Prostate gland (tissue), 2 donors: ENCODE measurements at regions of chr2 and their contacts with region 1.

Region 1: DNA sequence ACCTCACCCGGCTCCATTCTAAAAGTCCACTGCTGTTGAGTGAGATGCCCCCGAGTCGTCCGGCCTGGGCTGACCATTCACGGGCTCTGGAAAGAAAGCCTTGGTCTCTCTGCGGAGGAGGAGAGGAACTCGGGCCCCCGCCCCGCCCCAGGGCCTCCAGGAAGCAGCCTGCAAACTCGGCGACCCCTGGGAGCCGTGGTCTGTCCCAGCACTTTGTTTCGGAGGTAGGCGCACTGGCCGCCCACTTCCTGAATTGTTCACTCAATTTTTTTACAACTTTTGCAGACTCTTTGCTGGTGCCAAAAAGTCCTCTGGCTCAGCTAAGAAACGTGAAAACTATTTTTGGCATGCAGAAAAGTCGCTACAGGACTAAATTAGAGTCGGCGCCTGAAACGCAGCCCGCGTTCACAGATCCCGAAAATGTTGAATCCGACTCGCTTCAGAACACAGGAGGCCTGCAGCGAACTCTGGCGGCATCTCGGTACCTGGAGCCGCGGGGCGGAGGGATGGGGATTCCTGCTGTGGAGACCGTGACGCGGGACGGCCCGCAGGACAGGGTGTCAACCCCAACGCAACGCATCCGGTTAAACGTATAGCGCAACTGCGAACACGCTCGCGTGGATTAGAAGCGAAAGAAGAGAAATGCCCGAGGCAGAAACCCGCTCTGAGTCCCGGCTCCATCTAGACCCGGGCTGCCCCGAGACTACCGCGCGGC is 1.5 kb downstream of the PXDN start:
- DNase-seq: peak; percentile 85
- H3K4me3 ChIP-seq: peak overlapping the region; percentile 55 to 68
- H3K27ac ChIP-seq: peak overlapping the region; percentile 91 to 92
- H3K4me1 ChIP-seq: no peaks in the 10 kb centered on the region
- H3K27me3 ChIP-seq: no peaks in the 10 kb centered on the region
- CTCF ChIP-seq: peak; percentile 33 to 86 (median 68)
- POLR2A ChIP-seq: no peak

Region 2: DNA sequence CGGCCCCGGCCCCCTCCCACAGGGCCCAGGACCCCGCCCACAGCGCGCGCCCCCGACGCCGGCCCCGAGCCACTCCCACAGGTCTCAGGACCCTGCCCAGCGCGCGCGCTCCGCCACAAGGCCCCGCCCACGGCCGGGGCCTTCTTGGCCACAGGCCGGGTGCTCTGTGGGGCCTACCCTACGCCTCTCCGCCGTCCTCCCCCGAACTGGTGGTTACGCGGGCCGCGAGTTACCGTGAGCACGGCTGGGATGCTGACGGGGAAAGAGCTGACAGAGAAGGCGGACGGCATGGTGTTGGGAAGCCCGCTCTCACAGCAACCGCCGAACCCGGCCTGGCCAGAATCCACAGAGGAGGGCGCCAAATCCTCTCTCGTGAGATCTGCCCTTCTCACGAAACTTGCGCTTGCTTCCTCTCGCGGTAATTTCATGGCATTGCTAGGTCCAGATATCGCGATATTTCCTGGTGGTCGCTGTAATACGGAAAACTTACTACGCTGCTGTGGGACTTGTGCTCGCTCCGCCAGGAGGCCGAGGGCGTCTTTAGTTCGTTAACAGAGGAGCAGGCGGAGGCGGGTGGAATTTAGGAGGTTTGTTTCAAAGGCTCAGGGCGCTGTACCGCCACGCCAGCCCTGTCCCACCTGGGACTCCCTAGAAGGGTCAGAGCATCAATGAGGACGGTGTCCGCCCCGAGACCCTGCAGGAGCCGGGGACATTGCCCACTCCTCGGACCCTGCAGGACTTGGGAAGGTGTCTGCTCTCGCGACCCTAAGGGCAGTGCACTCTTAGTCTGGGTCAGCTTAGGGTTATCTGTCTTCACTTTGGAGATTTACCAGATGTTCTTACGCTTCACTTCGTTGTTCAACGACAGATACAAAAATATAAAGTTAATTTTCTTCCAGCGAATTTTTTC is 1065.5 kb before region 1 on chr2 and contains the start of gene TMEM18:
- intact Hi-C with region 1: loop called (anchors 10 kb)
- DNase-seq: peak; percentile 95
- H3K4me3 ChIP-seq: peak within 1 kb of the TSS; percentile 57 to 72
- H3K27ac ChIP-seq: peak within 1 kb of the TSS; percentile 95 to 98
- H3K4me1 ChIP-seq: no peaks in the 10 kb centered on the region
- H3K27me3 ChIP-seq: no peaks in the 10 kb centered on the region
- CTCF ChIP-seq: peak in 2 of 4 experiments; percentile 54 to 66
- POLR2A ChIP-seq: peak; percentile 72
- total RNA-seq, gene TMEM18: 17.7 to 19.3 TPM

Region 3: GRCh38 chr2:1550658-1551316 is 192.1 kb before region 1 on chr2:
- intact Hi-C with region 1: loop called (anchors 5 kb)
- DNase-seq: peak; percentile 33
- H3K4me3 ChIP-seq: no peak overlapping the region
- H3K27ac ChIP-seq: no peak overlapping the region
- H3K4me1 ChIP-seq: no peaks in the 10 kb centered on the region
- H3K27me3 ChIP-seq: no peaks in the 10 kb centered on the region
- CTCF ChIP-seq: peak; percentile 70 to 88 (median 85)
- POLR2A ChIP-seq: no peak

Region 4: GRCh38 chr2:1591978-1592907 is 150.6 kb before region 1 on chr2:
- intact Hi-C with region 1: loop called (anchors 1 kb)
- DNase-seq: peak; percentile 82
- H3K4me3 ChIP-seq: no peak overlapping the region
- H3K27ac ChIP-seq: no peak overlapping the region
- H3K4me1 ChIP-seq: peaks cover 2% of the 10 kb centered on the region
- H3K27me3 ChIP-seq: no peaks in the 10 kb centered on the region
- CTCF ChIP-seq: peak; percentile 54 to 91 (median 74)
- POLR2A ChIP-seq: no peak

Region 5: DNA sequence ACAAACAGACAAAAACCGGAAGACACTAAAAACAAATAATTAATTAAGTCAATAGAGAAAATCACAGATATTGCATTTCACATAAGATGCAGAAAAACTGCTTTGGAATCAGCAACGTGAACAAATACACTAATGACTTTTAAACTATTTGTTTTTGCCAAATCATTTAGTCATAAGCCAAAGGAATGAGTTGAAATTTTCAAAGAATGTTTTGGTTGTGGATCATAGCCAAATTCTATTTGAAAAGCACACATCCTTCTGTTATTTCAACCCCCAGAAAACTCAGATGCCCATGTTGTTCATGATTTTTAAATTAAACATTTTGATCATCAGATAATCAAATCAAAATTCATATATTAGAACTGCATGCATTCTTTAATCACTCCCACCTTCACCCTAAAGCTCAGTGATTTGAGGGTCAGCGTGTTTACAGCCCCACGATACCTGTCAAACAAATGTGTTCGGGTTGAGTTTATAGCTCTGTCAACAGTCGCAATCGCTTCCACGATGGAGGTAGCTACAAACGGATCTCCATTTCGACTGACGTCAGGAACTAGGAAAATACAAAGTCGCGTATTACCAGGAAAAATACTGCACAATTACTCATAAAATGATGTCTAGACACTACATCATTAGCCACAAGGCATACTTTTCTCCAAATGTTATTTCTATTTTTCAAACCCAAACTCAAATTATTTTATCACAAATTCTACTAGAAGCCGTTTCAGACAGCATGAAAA is 88.7 kb before region 1 on chr2:
- intact Hi-C with region 1: loop called (anchors 5 kb)
- DNase-seq: no peak
- H3K4me3 ChIP-seq: no peak overlapping the region
- H3K27ac ChIP-seq: peak overlapping the region; percentile 11 to 43
- H3K4me1 ChIP-seq: no peaks in the 10 kb centered on the region
- H3K27me3 ChIP-seq: no peaks in the 10 kb centered on the region
- CTCF ChIP-seq: no peak
- POLR2A ChIP-seq: no peak

Region 6: GRCh38 chr2:1675633-1676032 is 67.2 kb before region 1 on chr2:
- intact Hi-C with region 1: loop called (anchors 2 kb)
- DNase-seq: peak; percentile 74
- H3K4me3 ChIP-seq: no peak overlapping the region
- H3K27ac ChIP-seq: peak overlapping the region; percentile 79 to 80
- H3K4me1 ChIP-seq: no peaks in the 10 kb centered on the region
- H3K27me3 ChIP-seq: no peaks in the 10 kb centered on the region
- CTCF ChIP-seq: peak in 1 of 4 experiments; percentile 42
- POLR2A ChIP-seq: no peak

Region 7: DNA sequence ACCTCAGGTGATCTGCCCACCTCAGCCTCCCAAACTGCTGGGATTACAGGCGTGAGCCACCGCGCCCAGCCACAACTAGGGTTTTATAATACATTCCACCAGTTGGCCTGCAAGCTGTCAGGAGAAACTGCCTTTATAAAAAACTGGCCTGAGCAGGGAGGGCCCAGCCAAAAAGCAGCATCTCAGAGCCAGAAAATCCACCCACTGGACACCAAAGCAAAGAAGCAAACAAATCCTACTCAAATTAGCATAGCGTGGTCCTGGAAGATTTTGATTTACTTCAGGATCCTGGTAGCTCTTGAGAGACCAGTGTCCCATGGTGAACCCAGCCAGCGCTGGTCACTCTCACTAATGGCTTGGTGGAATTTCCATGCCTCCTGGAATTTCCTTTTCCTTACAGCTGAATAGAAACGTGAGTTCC is 61.5 kb after region 1 on chr2:
- intact Hi-C with region 1: no loop called
- DNase-seq: no peak
- H3K4me3 ChIP-seq: no peak overlapping the region
- H3K27ac ChIP-seq: no peak overlapping the region
- H3K4me1 ChIP-seq: no peaks in the 10 kb centered on the region
- H3K27me3 ChIP-seq: no peaks in the 10 kb centered on the region
- CTCF ChIP-seq: no peak
- POLR2A ChIP-seq: no peak

Region 8: GRCh38 chr2:1817256-1818051 is 74.6 kb after region 1 on chr2:
- intact Hi-C with region 1: loop called (anchors 2 kb)
- DNase-seq: peak; percentile 82
- H3K4me3 ChIP-seq: no peak overlapping the region
- H3K27ac ChIP-seq: peak overlapping the region; percentile 74 to 75
- H3K4me1 ChIP-seq: peaks cover 7% of the 10 kb centered on the region
- H3K27me3 ChIP-seq: no peaks in the 10 kb centered on the region
- CTCF ChIP-seq: peak; percentile 78 to 90 (median 86)
- POLR2A ChIP-seq: no peak